Colonic mucosa (tissue), 4 donors: ENCODE measurements at regions of chr11 and their contacts with region 1.

Region 1: GRCh38 chr11:69670158-69670845 is 4.9 kb downstream of the LTO1 start:
- DNase-seq: peak; percentile 79
- H3K4me3 ChIP-seq: no peak overlapping the region
- H3K27ac ChIP-seq: no peak overlapping the region
- H3K4me1 ChIP-seq: no peaks in the 10 kb centered on the region
- H3K27me3 ChIP-seq: no peaks in the 10 kb centered on the region
- CTCF ChIP-seq: peak; percentile 97

Region 2: DNA sequence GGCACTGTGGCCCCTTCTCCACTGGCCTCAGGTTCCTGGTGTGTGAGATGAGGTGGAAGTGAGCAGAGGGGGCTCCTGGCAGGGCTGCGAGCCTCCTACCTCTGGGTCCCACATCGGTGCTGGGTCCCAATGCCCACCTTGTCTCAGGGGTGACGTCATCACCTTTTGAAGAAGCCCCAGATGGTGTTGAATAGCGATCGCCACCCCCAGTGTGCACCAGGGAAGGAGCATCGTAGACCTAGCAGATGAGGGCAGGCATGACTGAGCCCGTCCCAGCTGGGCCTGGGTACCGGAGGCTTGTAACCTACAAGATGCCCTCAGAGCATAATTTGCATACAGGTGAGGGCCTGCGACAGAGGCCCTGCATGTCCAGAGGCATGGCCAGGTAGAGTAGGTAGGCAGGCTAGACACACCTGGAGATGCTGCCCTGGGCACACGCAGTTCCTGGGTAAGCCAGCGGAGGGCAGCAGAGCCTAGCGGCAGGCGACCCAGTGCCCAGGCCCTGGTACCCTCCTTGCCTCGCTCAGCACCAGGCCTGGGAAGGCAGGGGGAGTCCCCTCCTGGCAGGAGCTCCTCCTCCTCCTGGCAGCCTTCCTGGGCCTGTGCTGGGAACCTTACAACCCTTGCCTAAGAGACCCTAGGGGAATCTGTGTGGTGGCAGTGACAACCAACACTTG is 569.0 kb before region 1 on chr11:
- intact Hi-C with region 1: loop called (anchors 5 kb)
- DNase-seq: peak; percentile 77
- H3K4me3 ChIP-seq: no peak overlapping the region
- H3K27ac ChIP-seq: no peak overlapping the region
- H3K4me1 ChIP-seq: no peaks in the 10 kb centered on the region
- H3K27me3 ChIP-seq: no peaks in the 10 kb centered on the region
- CTCF ChIP-seq: peak; percentile 100

Region 3: GRCh38 chr11:69427337-69427736 is 243.0 kb before region 1 on chr11:
- intact Hi-C with region 1: no loop called
- DNase-seq: no peak
- H3K4me3 ChIP-seq: no peak overlapping the region
- H3K27ac ChIP-seq: no peak overlapping the region
- H3K4me1 ChIP-seq: no peaks in the 10 kb centered on the region
- H3K27me3 ChIP-seq: no peaks in the 10 kb centered on the region
- CTCF ChIP-seq: no peak

Region 4: DNA sequence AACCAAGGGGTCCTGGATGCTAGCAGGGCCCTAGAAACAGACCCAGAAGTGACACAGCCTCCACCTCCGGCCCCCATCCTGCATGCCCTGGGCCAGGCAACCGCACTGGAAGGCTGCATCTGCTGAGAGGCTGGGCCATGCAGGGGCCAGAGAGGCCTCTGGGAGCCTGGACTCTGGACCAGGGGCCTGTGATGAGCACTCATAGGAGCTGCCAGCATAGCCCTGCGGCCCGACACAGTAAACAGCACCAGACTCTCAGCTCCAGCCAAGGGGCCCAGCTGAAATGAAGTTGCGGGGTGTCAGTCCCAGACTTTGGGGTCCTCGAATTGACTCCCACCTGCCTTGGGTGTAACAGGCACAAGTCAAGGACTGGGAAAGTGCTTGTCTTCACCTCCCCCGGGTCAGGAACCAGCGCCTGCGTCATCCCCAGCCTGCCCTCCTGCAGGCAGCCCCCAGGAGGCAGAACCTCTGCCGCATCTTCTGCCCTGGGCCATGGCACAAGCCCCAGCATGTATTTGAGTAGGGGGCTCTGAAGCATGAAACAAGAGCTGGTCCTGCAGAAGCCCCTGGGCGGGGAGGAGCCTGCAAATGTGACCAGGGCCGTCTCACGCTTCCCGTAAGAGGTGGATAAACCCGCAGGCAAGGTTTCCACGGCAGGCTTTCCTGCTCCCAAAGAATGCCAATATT is 54.6 kb before region 1 on chr11:
- intact Hi-C with region 1: no loop called
- DNase-seq: no peak
- H3K4me3 ChIP-seq: no peak overlapping the region
- H3K27ac ChIP-seq: no peak overlapping the region
- H3K4me1 ChIP-seq: no peaks in the 10 kb centered on the region
- H3K27me3 ChIP-seq: no peaks in the 10 kb centered on the region
- CTCF ChIP-seq: no peak